ENCODE measurements at regions of chr11 and their contacts with region 1.

Region 1: DNA sequence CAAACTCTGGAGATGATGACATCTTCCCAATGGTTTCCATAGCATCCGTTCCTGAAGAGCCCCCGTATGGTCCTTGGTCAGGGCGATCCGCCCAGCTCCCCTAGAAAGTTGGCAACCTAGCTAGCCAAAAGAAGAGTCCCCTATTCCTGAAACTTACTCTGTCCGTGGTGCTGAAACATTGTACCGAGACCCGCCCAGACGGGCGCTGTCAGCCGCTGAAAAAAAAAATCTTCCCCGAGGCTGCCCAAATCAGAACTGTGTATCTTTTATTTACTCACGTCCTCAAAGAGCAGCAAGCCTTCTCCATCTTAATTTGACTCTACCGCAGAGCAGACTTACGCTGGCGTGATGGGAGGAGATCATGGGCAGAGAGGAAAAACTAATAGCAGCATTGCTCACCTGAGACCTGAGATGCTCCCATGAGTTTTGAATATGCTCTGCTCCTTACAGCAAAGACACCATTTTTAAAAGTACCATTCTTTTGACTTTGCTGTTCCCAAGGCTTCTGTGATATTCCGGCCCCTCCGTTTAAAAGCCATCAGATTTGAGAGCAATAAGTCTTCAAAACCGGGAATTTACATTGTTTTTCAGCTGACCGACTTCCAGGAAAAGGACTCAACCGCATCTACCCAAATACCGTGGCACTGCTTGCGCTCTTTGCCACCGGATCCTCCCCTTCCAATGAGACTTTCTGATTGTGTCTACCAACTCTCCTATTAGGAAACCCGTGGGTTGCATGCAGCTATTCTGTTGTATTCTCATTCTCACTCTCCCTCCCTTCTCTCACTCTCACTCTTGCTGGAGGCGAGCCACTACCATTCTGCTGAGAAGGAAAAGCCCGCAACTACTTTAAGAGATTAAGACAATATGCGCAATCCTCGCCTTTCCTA is at the start of gene SLC17A6:
- DNase-seq: peak in 2 of 5 donors; percentile 4 to 7
- H3K4me3 ChIP-seq: no peak within 1 kb of the TSS
- H3K4me3 Mint-ChIP-seq: no peak within 1 kb of the TSS
- H3K27ac ChIP-seq: no peak within 1 kb of the TSS
- H3K27ac Mint-ChIP-seq: no peak within 1 kb of the TSS
- H3K4me1 ChIP-seq: no peaks in the 10 kb centered on the region
- H3K4me1 Mint-ChIP-seq: peaks cover 0 to 8% (median 5%) of the 10 kb centered on the region in 4 donors
- H3K27me3 ChIP-seq: peaks cover 42% of the 10 kb centered on the region
- H3K27me3 Mint-ChIP-seq: peaks cover 48 to 49% of the 10 kb centered on the region in 2 donors
- total RNA-seq, gene SLC17A6: not detected

Region 2: GRCh38 chr11:22625448-22626287 is 287.8 kb after region 1 on chr11 and contains the start of gene FANCF:
- CTCF ChIA-PET with region 1: no interaction called
- POLR2A ChIA-PET with region 1: no interaction called
- intact Hi-C with region 1: loop called (anchors 10 kb)
- DNase-seq: peak; percentile 95 to 97 (median 97)
- H3K4me3 ChIP-seq: peak within 1 kb of the TSS; percentile 93 to 99
- H3K4me3 Mint-ChIP-seq: peak within 1 kb of the TSS; percentile 98 to 100 (median 99)
- H3K27ac ChIP-seq: peak within 1 kb of the TSS; percentile 92
- H3K27ac Mint-ChIP-seq: peak within 1 kb of the TSS; percentile 98 to 100 (median 99)
- H3K4me1 ChIP-seq: peaks cover 45% of the 10 kb centered on the region
- H3K4me1 Mint-ChIP-seq: peaks cover 29 to 48% (median 35%) of the 10 kb centered on the region in 4 donors
- H3K27me3 ChIP-seq: no peaks in the 10 kb centered on the region
- H3K27me3 Mint-ChIP-seq: no peaks in the 10 kb centered on the region
- total RNA-seq, gene FANCF: 22.2 to 23.5 TPM

Region 3: GRCh38 chr11:22730319-22730718 is 392.5 kb after region 1 on chr11:
- CTCF ChIA-PET with region 1: no interaction called
- POLR2A ChIA-PET with region 1: no interaction called
- intact Hi-C with region 1: loop called (anchors 1 kb)
- DNase-seq: peak in 4 of 5 donors; percentile 1 to 35 (median 3)
- H3K4me3 ChIP-seq: no peak overlapping the region
- H3K4me3 Mint-ChIP-seq: no peak overlapping the region
- H3K27ac ChIP-seq: no peak overlapping the region
- H3K27ac Mint-ChIP-seq: no peak overlapping the region
- H3K4me1 ChIP-seq: no peaks in the 10 kb centered on the region
- H3K4me1 Mint-ChIP-seq: no peaks in the 10 kb centered on the region
- H3K27me3 ChIP-seq: no peaks in the 10 kb centered on the region
- H3K27me3 Mint-ChIP-seq: peaks cover 0 to 1% of the 10 kb centered on the region in 2 donors

Region 4: DNA sequence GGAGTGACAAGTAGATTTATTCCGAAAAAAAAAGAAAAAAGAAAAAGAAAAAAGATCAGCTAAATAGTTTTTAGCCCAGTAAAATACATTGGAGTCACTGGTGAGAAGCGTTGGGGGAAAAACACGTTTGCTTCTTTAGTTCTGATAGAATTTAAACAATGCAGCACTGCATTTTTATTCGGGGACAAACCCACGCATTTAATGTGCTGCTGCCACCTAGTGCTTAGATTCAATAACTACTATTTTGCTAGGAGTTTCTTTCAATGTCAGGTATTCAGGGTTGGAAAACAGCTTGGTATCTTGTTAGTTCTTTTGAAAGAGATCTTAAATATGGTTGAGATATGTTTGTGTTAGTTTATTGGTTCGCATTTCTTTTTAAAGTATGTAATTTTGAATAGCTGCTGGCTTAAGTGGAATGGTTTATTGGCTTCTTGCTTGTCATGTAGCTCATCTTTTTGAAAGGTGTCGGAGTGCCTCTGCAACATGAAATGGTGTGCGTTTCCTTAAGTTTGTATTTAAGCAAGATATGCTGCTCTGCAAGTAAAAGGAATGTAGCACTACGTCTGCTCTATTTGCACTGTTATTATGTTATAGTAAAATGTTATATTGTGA is 449.8 kb after region 1 on chr11:
- CTCF ChIA-PET with region 1: interaction called, 35 read pairs
- POLR2A ChIA-PET with region 1: no interaction called
- intact Hi-C with region 1: loop called (anchors 1 kb)
- DNase-seq: peak in 4 of 5 donors; percentile 26 to 42 (median 40)
- H3K4me3 ChIP-seq: no peak overlapping the region
- H3K4me3 Mint-ChIP-seq: no peak overlapping the region
- H3K27ac ChIP-seq: no peak overlapping the region
- H3K27ac Mint-ChIP-seq: no peak overlapping the region
- H3K4me1 ChIP-seq: no peaks in the 10 kb centered on the region
- H3K4me1 Mint-ChIP-seq: no peaks in the 10 kb centered on the region
- H3K27me3 ChIP-seq: no peaks in the 10 kb centered on the region
- H3K27me3 Mint-ChIP-seq: peaks cover 7 to 9% of the 10 kb centered on the region in 2 donors

Region 5: DNA sequence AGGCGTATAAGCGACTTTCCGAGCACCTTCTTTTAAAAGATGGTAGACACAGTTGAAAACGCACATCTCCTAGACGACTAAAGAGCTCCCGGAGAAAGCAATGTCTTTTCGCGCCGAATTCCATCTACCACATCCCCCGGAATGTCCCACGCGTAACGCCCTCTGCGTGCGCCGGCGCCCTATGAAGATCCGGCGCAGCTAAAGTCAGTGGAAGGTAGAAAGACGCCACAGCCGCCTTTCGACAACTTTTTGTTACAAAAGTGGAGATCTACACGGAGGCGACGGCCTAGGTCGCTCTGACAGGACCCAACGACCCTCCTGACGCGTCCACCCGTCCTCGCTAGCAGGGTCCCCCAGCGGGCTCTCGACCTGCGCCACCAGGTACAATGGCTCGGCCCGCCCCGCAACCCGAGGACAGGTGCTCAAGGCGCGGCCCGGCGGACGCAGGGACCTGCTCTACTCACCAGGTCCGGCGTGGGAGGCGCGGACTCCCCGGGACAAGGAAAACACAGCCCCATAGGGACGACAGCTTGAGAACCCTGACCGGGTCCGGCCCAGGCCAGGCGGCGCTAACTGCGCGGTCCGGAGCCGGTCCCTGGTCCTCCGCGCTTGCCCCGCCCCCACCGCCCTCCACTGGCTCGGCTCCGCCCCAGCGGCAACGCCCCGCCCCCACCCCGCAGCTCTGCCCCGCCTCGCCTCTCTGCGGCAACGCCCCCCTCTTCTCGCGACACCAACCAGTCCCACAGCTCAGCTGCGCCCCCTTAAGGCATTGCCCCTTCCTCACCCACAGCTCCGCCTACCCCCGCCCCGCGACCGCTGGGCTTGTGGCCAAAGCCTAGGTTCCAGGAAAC is 491.6 kb after region 1 on chr11 and contains the start of gene SVIP:
- CTCF ChIA-PET with region 1: interaction called, 3 read pairs
- POLR2A ChIA-PET with region 1: no interaction called
- intact Hi-C with region 1: loop called (anchors 1 kb)
- DNase-seq: peak; percentile 89 to 91 (median 89)
- H3K4me3 ChIP-seq: peak within 1 kb of the TSS; percentile 33 to 81
- H3K4me3 Mint-ChIP-seq: peak within 1 kb of the TSS; percentile 93 to 99 (median 95)
- H3K27ac ChIP-seq: peak within 1 kb of the TSS; percentile 75
- H3K27ac Mint-ChIP-seq: peak within 1 kb of the TSS; percentile 94 to 97 (median 95)
- H3K4me1 ChIP-seq: peaks cover 19% of the 10 kb centered on the region
- H3K4me1 Mint-ChIP-seq: peaks cover 8 to 22% (median 12%) of the 10 kb centered on the region in 4 donors
- H3K27me3 ChIP-seq: no peaks in the 10 kb centered on the region
- H3K27me3 Mint-ChIP-seq: no peaks in the 10 kb centered on the region
- total RNA-seq, gene SVIP: 64.3 to 73.8 TPM

Measured in CD4-positive, alpha-beta memory T cell (primary cell).